Cardiac septum (tissue), 1 donor: ENCODE measurements at regions of chr18 and their contacts with region 1.

Region 1: DNA sequence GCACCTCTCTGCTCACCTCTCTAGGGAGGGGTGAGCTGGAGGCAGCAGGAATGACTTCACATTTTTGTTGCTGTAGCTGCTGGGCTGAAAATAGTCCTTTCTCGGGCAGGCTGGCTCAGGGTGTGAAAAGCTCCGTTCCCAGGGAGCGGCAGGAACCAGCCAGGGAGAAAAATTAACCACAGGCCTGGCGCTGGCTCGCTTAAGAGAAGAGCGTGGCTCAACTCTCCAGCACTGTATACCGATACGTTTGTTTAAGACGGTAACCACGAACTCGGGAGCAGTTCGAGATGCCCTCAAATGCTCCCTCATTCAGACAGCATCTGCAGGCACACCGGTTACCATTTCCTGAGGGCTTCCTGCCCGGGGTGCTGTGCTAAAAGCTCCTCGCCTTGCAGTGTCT is 129.6 kb downstream of the CELF4 start:
- DNase-seq: no peak

Region 2: DNA sequence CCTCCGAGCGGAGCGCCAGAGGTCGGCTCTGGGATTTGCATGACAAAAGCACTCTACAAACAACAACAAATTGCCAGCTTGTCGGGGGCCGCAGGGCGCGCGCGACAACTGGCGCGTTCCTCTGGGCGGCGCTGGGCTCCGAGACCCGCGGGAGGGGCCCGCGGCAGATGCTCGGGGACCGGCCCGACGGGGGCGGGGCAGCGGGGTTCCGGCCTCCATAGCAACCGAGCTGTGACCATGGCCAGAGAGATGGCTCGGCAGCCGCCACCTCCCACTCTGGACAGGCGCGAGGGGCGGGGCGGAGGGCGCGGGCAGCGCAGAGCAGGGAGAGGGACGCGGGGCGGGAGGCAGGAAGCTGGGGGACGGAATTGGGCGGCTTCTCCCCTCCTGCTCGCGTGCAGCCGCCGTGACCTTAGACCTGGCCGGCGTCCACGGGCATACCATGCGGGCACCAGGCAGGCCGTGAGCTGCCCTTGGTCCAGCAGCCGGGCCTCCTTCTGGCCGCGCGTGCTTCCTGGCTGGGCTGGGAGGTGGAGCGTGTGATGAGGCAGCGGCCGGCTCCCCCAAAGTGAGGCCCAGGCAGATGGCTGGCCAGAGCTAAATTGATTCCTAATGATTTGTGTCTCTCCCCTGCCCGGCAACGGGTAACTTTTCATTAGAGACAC is 41.9 kb before region 1 on chr18:
- intact Hi-C with region 1: loop called (anchors 5 kb)
- DNase-seq: peak; percentile 85